MCF 10A (cell line): ENCODE measurements at regions of chr1 and their contacts with region 1.

Region 1: DNA sequence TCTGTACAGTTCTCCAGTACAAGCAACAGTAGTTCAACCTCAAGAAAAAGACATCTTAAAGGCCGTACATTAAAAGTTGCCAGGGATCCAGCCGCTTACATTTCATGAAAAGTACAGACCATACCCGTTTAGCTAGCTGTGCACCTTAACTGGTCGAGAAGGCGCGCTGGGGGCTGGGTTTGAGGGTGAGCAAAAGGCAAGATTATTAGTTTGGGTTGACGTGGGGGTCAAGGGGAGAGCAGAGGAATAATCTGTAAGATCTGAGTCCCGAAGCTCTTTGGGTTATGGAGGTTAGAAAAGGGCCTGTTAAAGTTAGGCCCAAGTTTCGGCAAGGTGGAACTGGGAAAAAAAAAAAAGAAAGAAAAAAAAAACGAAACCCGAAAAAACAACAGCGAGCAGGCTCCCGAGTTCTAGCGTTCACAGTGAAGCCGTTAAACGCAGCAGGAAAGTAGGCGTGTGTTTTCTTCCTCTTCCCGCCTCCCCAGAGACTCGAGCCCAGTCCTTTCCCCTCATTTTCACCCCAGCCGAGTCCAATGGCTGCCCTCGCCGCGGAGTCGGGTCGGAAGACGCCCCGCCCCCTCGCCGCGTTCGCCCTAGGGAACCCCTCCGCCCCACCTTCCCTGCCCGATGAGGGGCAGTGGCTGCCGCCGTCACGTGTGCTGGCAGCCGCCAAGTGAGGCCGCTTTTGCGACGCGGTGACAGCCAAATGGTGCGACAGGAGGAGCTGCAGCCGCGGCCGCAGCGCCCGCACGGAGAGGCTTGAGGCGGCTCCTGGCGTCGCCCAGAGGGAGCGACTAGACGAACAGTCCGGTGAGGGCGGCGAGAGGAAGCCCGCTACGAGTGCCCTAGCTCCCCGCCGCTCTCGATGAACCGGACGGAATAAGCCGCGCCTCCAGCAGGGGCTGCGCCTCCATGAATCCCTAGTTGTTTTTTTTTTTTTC is at the start of gene PKN2:
- DNase-seq: peak; percentile 99
- H3K4me3 Mint-ChIP-seq: peak within 1 kb of the TSS; percentile 96
- H3K27ac Mint-ChIP-seq: peak within 1 kb of the TSS; percentile 87
- H3K4me1 Mint-ChIP-seq: peaks cover 6% of the 10 kb centered on the region
- H3K27me3 Mint-ChIP-seq: no peaks in the 10 kb centered on the region
- CTCF ChIP-seq: no peak
- total RNA-seq, gene PKN2: 35.4 and 40.2 TPM in 2 replicates

Region 2: GRCh38 chr1:88433541-88433940 is 250.3 kb before region 1 on chr1:
- CTCF ChIA-PET with region 1: no interaction called
- POLR2A ChIA-PET with region 1: no interaction called
- intact Hi-C with region 1: no loop called
- DNase-seq: peak; percentile 40
- H3K4me3 Mint-ChIP-seq: no peak overlapping the region
- H3K27ac Mint-ChIP-seq: no peak overlapping the region
- H3K4me1 Mint-ChIP-seq: no peaks in the 10 kb centered on the region
- H3K27me3 Mint-ChIP-seq: no peaks in the 10 kb centered on the region
- CTCF ChIP-seq: no peak

Region 3: DNA sequence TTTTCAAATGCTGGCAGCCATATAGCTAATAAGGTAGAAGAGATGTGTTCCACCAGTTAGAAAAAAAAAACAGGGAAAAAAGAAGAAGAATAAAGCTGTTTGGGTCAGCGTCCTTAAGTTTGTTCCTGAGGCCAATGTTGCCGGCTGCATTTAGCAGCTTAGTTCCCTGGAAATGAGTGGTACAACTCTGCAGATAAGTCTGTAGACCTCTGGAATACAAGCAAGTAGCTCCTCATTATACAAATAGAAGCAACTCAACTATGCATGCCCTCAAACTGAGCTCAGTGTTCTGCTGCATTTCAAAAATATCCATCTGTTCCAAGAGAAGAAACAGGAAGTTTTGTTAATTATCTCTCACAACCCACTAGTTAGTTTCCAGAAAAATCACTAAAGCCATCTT is 180.9 kb before region 1 on chr1:
- CTCF ChIA-PET with region 1: no interaction called
- POLR2A ChIA-PET with region 1: no interaction called
- intact Hi-C with region 1: no loop called
- DNase-seq: no peak
- H3K4me3 Mint-ChIP-seq: no peak overlapping the region
- H3K27ac Mint-ChIP-seq: no peak overlapping the region
- H3K4me1 Mint-ChIP-seq: no peaks in the 10 kb centered on the region
- H3K27me3 Mint-ChIP-seq: peaks cover 19% of the 10 kb centered on the region
- CTCF ChIP-seq: no peak

Region 4: DNA sequence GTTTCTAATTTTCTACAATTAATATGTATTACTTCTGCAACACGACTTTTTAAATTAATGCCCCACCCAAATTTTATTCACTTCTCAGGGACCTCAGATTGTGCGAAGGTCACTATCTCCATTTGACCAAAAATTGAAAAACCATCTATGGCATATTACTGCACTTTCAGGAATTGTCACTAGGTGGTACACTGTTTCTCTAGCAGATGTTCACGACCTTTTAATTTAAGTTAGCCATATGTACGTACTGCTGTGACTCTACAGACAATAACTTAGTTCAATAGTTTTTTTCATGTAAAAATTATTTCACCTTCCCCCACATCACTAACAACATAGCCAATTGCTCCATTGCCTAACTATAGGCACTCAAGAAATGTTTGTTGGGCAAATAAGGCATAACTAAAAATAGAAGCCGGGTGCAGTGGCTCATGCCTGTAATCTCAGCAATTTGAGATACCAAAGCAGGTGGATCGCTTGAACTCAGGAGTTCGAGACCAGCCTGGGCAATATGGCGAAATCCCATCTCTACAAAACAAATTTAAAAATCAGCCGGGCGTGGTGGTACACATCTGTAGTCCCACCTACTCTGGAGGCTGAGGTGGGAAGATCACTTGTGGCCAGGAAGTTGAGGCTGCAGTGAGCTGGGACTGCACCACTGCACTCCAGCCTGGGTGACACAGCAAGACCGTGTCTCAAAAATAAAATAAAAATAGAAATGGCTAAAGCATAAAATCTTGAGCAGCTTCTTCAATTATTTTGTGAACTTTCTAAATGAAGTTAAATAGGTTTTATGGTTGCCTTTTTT is 75.5 kb before region 1 on chr1:
- CTCF ChIA-PET with region 1: no interaction called
- POLR2A ChIA-PET with region 1: interaction called, 6 read pairs
- intact Hi-C with region 1: loop called (anchors 2 kb)
- DNase-seq: peak; percentile 56
- H3K4me3 Mint-ChIP-seq: no peak overlapping the region
- H3K27ac Mint-ChIP-seq: no peak overlapping the region
- H3K4me1 Mint-ChIP-seq: peaks cover 6% of the 10 kb centered on the region
- H3K27me3 Mint-ChIP-seq: no peaks in the 10 kb centered on the region
- CTCF ChIP-seq: peak; percentile 58

Region 5: DNA sequence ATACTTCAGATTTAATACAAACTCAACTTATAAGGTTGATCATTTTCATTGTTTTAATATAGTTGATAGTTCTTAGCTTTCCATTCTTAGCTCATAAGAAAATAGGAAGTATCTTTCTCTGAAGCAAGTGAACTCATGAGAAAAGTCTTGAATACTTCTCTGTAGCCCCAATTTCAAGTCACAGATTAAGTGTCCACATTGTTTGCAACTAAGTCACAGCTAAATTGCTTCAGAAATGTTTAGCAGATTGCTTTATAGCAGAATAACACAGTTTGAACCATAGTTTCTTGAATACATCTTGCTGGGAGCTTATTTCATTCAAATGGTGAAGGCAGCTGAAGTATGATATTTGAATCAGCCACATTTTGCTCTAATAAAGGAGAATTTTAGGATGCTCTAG is 10.4 kb before region 1 on chr1:
- CTCF ChIA-PET with region 1: no interaction called
- POLR2A ChIA-PET with region 1: interaction called, 36 read pairs
- intact Hi-C with region 1: no loop called
- DNase-seq: no peak
- H3K4me3 Mint-ChIP-seq: no peak overlapping the region
- H3K27ac Mint-ChIP-seq: no peak overlapping the region
- H3K4me1 Mint-ChIP-seq: no peaks in the 10 kb centered on the region
- H3K27me3 Mint-ChIP-seq: no peaks in the 10 kb centered on the region
- CTCF ChIP-seq: no peak

Region 6: DNA sequence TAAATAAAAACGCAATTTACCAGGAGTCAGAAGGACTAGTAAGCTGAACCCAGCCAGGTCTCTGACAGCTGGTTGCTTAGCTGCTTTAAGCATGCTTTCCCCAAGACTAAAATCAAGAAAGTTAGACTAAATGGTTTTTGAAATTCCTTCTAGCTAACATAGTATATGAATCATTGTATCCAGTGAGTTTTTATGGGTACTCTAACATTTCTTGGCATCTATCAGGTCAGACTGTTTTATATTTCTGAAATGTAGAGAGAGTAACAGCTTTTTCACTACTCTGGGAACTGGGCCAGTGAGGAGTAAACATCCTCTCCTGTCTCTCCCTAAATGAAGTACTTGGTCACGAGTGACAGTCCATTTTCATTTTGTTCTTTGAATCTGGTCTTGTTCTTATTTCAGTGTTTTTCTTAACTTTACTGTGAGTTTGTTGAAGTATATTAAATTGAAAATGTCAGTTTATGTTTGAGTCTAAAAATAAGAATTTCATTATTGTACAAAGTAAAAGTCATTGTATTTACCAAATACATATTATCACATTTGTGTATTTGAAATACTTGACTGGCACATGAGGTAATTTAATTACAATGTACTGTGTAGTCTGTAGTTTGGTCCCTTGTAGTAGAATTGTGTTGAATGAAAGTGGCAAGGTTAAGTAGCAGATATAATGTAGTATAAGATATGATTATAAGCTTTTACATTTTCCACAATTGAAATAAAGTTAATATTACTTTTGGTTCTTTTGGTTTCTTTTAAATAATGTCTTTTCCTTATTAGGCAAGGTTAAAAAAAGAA is 47.9 kb after region 1 on chr1:
- CTCF ChIA-PET with region 1: interaction called, 4 read pairs
- POLR2A ChIA-PET with region 1: interaction called, 33 read pairs
- intact Hi-C with region 1: loop called (anchors 2 kb)
- DNase-seq: peak; percentile 65
- H3K4me3 Mint-ChIP-seq: peak overlapping the region; percentile 62
- H3K27ac Mint-ChIP-seq: peak overlapping the region; percentile 77
- H3K4me1 Mint-ChIP-seq: peaks cover 14% of the 10 kb centered on the region
- H3K27me3 Mint-ChIP-seq: no peaks in the 10 kb centered on the region
- CTCF ChIP-seq: no peak

Region 7: DNA sequence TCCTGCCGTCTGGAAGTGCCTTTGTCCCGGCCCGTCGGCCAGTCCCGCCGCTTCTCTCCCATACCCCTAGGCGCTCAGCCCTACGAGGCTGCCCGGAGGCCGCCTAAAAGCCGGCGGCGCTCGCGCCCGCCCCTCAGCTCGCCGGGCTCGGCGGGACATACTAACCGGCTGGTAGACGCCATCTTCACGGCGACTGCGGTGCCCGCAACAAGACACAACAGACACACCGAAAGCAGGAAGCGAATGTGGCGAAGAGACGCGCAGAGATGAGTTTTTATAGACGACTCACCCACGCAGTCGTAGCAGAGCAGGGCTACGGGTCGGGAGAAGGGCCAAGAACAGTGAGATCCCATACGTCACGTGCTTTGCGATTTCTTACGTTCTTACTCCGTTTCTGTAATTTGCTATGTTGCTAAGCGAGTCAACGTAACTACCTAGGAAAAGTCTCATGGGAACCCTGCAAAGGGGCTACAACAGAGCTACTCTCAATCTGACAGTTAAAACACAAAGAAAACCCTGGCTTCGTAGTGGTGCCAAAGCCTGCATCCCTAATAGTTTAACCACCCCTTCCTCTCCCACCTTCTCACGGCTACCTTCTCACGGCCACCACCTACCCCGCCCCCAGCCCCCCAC is 207.6 kb after region 1 on chr1 and contains the start of gene GTF2B:
- CTCF ChIA-PET with region 1: interaction called, 7 read pairs
- POLR2A ChIA-PET with region 1: interaction called, 40 read pairs
- intact Hi-C with region 1: no loop called
- DNase-seq: peak; percentile 96
- H3K4me3 Mint-ChIP-seq: peak within 1 kb of the TSS; percentile 99
- H3K27ac Mint-ChIP-seq: peak within 1 kb of the TSS; percentile 99
- H3K4me1 Mint-ChIP-seq: peaks cover 19% of the 10 kb centered on the region
- H3K27me3 Mint-ChIP-seq: no peaks in the 10 kb centered on the region
- CTCF ChIP-seq: no peak
- total RNA-seq, gene GTF2B: 16.9 and 18.8 TPM in 2 replicates

Region 8: GRCh38 chr1:89112871-89113613 is 429.2 kb after region 1 on chr1:
- CTCF ChIA-PET with region 1: no interaction called
- POLR2A ChIA-PET with region 1: no interaction called
- intact Hi-C with region 1: no loop called
- DNase-seq: no peak
- H3K4me3 Mint-ChIP-seq: no peak overlapping the region
- H3K27ac Mint-ChIP-seq: no peak overlapping the region
- H3K4me1 Mint-ChIP-seq: no peaks in the 10 kb centered on the region
- H3K27me3 Mint-ChIP-seq: no peaks in the 10 kb centered on the region
- CTCF ChIP-seq: no peak